ENCODE measurements at regions of chr1 and their contacts with region 1.

Region 1: DNA sequence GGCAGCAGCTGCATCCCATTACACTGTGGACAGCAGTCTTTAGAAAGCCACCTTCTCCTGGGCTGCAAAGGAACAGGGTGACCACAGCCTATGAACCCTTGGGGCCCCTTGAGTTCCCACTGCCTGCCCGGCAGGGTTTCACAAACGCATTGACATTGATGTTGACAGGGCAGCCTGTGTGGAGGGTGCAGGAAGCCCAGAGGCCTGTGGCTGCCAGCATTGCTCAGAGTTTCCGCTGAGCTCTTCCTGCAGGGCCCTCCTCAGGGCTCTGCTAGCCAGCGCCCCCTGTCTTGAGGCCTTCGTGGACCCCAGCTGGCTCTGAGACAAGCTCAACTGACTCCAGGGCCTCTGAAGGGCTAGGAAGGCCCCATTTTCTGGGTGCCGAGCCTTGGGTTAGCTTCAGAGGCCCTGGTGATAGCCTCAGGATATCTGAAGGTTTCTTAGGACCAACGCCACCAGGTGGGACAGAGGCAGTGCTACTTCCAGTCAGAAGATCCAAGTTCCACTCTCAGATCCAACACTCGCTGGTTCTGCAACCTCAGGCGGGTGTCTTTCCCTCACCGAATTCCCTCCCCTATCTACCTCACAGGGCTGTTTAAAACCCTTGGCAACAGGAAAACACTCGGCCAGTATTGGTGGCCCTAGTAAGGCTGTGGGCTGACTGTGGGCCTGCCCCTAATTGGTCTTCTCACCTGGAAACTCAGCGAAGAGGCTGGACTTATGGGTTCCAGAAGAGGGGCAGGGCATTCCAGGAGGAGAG is 27.2 kb upstream of the EPS8L3 start:
- DNase-seq: peak; percentile 60
- H3K4me3 ChIP-seq: no peak overlapping the region
- H3K27ac ChIP-seq: peak overlapping the region in 3 of 4 donors; percentile 30 to 78 (median 45)
- H3K4me1 ChIP-seq: peaks cover 43 to 86% (median 58%) of the 10 kb centered on the region in 4 donors
- H3K27me3 ChIP-seq: no peaks in the 10 kb centered on the region
- CTCF ChIP-seq: peak in 3 of 5 experiments; percentile 13 to 19 (median 17)
- EP300 ChIP-seq: no peak
- POLR2A ChIP-seq: no peak

Region 2: GRCh38 chr1:109667452-109668122 is 123.3 kb before region 1 on chr1 and contains the start of gene GSTM2:
- in situ Hi-C with region 1: no loop called
- intact Hi-C with region 1: no loop called
- DNase-seq: peak; percentile 93
- H3K4me3 ChIP-seq: peak within 1 kb of the TSS; percentile 36 to 61 (median 44)
- H3K27ac ChIP-seq: peak within 1 kb of the TSS; percentile 35 to 78 (median 62)
- H3K4me1 ChIP-seq: peaks cover 0 to 14% (median 6%) of the 10 kb centered on the region in 4 donors
- H3K27me3 ChIP-seq: no peaks in the 10 kb centered on the region
- CTCF ChIP-seq: no peak
- EP300 ChIP-seq: no peak
- POLR2A ChIP-seq: no peak
- total RNA-seq, gene GSTM2: 27.0 to 87.5 (median 57.2) TPM

Region 3: DNA sequence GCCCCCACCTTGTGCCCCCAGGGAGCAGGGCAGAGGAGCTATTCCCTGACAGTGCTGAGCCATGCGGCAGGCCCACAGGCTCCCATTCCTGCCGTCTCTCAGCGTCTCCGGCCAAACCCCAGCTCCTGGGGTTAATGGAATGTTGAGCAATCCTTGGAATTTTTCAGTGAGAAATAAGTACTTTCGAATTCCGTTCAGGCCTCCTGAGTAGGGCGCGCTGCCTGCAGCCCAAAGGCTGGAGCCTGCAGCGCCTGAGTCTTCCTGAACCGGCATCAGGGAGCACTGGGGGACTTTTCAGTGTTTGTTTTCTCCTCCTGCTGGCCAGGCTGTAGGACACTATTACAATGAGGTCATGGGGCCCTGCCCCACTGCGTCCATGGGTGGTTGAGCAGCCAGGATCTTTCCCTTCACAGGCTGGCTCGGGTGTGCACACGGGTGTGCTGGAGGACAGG is 86.4 kb after region 1 on chr1:
- in situ Hi-C with region 1: no loop called
- intact Hi-C with region 1: loop called (anchors 2 kb)
- DNase-seq: peak; percentile 31
- H3K4me3 ChIP-seq: no peak overlapping the region
- H3K27ac ChIP-seq: peak overlapping the region; percentile 79 to 84 (median 81)
- H3K4me1 ChIP-seq: peaks cover 0 to 30% (median 14%) of the 10 kb centered on the region in 4 donors
- H3K27me3 ChIP-seq: no peaks in the 10 kb centered on the region
- CTCF ChIP-seq: peak in 3 of 5 experiments; percentile 12 to 25 (median 21)
- EP300 ChIP-seq: no peak
- POLR2A ChIP-seq: no peak

Region 4: DNA sequence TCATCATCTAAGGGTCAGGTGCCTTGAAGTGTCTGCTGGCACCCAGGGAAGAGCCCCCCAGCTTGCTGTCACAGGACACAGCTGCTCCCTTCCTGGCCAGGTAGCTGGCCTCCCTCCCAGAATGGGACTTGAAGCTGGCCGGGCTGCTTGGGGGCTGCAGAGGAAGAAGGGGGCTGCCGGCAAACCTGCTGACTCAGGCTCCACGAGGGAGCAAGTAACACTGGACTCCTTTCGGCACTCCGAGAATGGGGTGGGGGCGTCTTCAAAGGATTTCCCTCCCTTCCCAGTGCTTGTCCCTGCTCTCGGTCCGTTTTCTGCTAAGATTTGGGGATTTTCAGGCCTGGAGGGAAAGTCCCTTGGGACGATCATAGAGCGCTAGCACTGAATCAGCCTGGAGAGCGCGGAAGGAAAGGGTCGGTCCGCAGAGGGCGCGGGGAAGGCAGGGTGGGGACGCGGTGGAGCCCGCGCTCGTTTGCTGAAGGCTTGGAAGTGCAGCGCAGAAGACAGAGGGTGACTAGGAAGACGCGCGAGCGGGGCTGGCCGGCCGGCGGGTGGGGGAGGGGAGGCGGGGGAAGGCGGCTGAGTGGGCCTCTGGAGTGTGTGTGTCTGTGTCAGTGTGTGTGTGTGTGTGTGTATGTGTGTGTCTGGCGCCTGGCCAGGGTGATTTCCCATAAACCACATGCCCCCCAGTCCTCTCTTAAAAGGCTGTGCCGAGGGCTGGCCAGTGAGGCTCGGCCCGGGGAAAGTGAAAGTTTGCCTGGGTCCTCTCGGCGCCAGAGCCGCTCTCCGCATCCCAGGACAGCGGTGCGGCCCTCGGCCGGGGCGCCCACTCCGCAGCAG is 119.4 kb after region 1 on chr1 and contains the start of gene CSF1:
- in situ Hi-C with region 1: loop called in 2 of 4 experiments (anchors 10 to 25 kb)
- intact Hi-C with region 1: no loop called
- DNase-seq: peak; percentile 74
- H3K4me3 ChIP-seq: peak within 1 kb of the TSS; percentile 41 to 80 (median 66)
- H3K27ac ChIP-seq: peak within 1 kb of the TSS; percentile 77 to 88 (median 82)
- H3K4me1 ChIP-seq: peaks cover 0 to 39% (median 25%) of the 10 kb centered on the region in 4 donors
- H3K27me3 ChIP-seq: peaks cover 5% of the 10 kb centered on the region
- CTCF ChIP-seq: no peak
- EP300 ChIP-seq: no peak
- POLR2A ChIP-seq: peak; percentile 66
- total RNA-seq, gene CSF1: 9.7 to 63.1 (median 14.4) TPM

Region 5: DNA sequence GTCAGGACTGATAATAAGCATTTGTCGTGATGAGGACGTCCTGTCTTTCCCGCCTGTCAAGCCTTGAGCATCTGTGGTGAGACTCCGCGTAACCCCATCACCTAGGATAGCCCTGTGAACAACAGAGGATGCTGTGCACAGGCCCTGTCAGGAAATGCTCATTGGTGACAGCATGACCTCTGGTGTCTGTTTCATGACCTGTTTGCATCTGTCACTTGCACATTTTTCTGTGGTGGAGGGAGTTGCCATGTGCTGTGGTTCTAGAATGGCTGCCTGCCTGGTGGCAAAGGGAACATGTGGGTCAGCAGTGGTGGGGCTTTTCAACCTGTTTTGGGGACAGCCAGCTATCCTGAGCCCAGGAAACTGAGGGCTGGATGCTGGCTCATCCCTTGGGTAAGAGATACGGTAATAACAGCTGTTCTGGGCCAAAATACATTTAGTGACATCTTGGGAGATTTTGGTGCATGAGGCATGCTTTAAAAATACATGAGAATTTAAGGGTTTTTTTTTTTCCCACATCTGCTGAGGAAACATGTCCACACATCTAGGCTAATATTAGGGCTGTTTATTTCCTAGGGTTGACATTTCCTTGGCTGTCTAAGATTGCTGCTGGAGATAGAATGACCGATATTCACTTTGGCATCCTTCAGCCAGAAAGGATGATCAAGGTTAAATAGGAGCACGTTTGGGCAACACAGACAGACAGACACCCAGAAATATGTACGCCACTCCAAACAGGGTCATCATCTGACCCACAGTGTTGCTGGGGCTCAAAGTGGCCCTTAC is 472.1 kb after region 1 on chr1:
- in situ Hi-C with region 1: no loop called
- intact Hi-C with region 1: no loop called
- DNase-seq: no peak
- H3K4me3 ChIP-seq: no peak overlapping the region
- H3K27ac ChIP-seq: no peak overlapping the region
- H3K4me1 ChIP-seq: no peaks in the 10 kb centered on the region
- H3K27me3 ChIP-seq: no peaks in the 10 kb centered on the region
- CTCF ChIP-seq: no peak
- EP300 ChIP-seq: no peak
- POLR2A ChIP-seq: no peak

Region 6: DNA sequence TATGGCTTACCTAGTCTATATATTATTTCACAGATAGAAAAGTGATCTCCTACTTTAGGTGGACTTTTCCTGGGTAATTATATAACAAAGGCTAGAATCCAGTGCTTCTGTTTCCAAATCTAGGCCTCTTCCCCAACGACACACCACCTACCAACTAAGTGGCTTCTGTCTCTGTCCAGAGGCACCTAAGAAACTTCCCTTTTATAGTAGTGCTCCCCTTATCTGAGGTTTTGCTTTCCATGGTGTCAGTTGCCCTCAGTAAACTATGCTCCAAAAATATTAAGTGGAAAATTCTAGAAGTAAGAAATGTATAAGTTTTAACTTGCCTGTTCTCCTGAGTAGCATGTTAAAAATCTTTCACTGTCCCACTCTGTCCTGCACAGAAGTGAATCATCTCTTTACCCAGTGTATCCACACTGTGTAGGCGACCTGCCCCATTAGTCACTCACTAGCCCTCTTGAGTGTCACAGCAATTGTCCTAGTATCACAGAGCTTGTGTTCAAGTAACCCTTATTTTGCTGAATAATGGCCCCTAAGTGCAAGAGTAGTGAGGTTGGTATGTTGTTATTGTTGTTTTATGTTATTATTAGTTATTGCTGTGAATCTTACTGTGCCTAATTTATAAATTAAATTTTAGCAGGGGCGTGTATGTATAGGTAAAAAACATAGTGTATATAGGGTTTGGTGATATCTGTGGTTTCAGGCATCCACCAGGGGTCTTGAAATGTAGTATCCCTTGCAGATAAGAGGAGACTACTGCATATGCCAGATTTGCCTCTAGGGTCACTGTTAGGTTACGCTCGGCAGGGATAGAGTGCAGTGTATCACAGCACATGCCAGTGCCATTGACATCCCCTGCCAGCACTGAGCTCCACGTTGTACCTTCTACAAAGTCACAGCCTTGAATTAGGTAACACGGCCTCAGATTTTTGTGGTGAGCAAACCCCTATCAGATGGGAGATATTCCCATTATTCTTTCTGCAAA is 1067.3 kb after region 1 on chr1:
- in situ Hi-C with region 1: no loop called
- intact Hi-C with region 1: no loop called
- DNase-seq: no peak
- H3K4me3 ChIP-seq: no peak overlapping the region
- H3K27ac ChIP-seq: no peak overlapping the region
- H3K4me1 ChIP-seq: no peaks in the 10 kb centered on the region
- H3K27me3 ChIP-seq: no peaks in the 10 kb centered on the region
- CTCF ChIP-seq: no peak
- EP300 ChIP-seq: no peak
- POLR2A ChIP-seq: no peak

Measured in transverse colon (tissue), 4 donors.